ENCODE measurements at regions of chrX and their contacts with region 1.

Region 1: DNA sequence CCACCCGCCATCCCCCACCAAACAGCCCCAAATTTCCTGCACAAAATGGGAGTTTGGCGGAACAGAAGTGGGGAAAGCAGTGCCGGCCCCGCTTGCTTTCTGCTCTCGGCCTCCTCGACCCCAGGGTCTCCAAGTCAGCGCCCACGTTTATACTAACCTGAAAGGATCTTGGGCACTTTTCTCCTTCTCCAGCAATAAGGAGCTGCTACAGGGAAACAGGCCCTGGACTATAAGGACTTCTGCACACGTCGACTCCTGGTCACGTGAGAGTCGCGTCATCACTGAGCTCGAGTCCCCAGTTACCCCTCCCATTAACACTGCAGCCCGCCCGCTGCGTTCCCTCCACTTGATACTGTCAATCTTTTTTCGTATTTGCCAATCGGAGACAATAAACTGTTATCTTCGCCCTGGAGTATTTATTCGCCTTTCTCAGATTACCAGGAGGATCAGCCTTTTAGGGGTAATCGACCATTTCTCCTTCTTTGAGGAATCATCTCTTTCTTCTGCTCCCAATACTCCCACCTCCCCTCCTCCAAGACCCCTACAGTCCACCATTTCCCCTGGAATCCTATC is at the start of gene TCEAL8:
- DNase-seq: peak; percentile 71 to 81
- ATAC-seq: peak; percentile 83 to 98 (median 92)
- H3K4me3 ChIP-seq: peak within 1 kb of the TSS; percentile 65
- H3K27ac ChIP-seq: peak within 1 kb of the TSS; percentile 62
- H3K4me1 ChIP-seq: no peaks in the 10 kb centered on the region
- H3K27me3 ChIP-seq: no peaks in the 10 kb centered on the region
- CTCF ChIP-seq: no peak
- total RNA-seq, gene TCEAL8: 6.6 to 15.8 (median 8.2) TPM

Region 2: GRCh38 chrX:103214870-103215424 is 40.1 kb before region 1 on chrX and contains the start of gene BEX4:
- intact Hi-C with region 1: loop called in 1 of 2 experiments (anchors 5 kb)
- DNase-seq: peak; percentile 79 to 85
- ATAC-seq: peak; percentile 69 to 88 (median 78)
- H3K4me3 ChIP-seq: peak within 1 kb of the TSS; percentile 68
- H3K27ac ChIP-seq: peak within 1 kb of the TSS; percentile 61
- H3K4me1 ChIP-seq: no peaks in the 10 kb centered on the region
- H3K27me3 ChIP-seq: peaks cover 0 to 43% (median 0%) of the 10 kb centered on the region in 3 donors
- CTCF ChIP-seq: no peak
- total RNA-seq, gene BEX4: 1.9 to 4.6 (median 2.8) TPM

Measured in psoas muscle (tissue), 8 donors.